AG04450 (cell line): ENCODE measurements at regions of chr13 and their contacts with region 1.

Region 1: DNA sequence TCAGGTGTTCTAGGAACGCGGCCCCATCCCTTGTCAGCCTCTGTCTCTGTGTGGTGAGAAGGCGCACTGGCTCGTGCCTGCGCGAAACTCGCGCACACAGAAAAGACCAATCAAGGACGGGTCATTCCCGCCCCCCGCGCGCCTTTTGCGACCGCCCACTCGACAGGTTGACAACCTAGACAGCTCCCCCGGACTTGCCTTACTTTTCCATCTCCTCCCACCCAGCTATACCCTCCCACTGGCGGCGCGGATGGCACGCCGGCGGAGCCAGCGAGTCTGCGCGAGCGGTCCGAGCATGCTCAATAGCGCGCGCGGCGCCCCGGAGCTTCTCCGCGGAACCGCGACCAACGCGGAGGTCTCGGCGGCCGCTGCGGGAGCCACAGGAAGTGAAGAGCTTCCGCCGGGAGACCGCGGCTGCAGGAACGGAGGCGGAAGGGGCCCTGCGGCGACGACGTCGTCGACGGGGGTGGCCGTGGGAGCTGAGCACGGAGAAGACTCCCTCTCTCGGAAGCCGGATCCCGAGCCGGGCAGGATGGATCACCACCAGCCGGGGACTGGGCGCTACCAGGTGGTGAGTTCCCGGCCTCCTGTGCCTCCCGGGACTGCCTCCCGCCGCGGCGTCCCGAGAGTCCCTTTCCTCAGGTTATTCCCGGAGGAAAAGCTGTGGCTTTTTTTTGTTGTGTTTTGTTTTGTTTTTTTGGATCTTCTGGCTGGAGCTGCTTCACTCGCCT is at the start of gene NDFIP2:
- DNase-seq: peak; percentile 58
- H3K4me3 ChIP-seq: peak within 1 kb of the TSS; percentile 85
- H3K27ac ChIP-seq: peak within 1 kb of the TSS; percentile 31
- H3K27me3 ChIP-seq: no peaks in the 10 kb centered on the region
- CTCF ChIP-seq: no peak
- polyA plus RNA-seq, gene NDFIP2: 32.5 and 33.0 TPM in 2 replicates

Region 2: DNA sequence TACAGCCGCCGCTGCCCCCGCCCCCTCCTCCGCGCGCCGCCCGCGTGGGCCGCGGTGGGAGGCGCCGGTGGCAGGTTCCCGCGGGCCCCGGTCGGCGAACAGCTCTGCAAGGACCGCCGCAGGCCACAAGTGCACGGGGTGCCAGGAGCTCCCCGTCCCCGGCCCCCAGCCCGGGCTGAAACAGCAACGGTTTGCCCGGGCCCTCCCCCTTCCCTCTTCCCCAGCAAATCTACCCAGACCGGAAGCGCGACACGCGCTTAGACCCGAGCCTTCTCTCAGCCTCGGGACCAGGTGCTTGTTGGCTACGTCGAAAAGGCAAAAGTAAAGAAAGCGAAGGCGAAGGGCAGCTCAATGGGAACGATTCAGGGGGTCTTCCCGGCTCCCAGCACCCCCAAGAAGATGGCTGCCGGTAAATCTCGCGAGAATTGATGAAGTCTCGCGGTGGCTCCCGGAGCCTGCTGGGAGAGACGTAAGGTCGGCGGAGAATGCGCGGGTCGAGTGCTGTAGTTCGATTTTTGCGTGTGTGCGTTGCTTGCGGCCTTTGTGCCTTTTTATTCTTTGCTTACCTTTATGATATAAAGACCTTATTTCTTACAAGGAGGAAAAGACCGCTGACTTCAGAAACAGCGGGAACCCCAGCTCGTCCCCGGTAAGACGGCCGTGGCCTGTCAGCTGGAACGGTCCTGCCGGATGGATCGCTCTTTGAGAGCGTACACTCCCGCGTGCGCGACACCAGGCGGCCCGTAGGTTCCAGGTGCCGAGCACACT is 75.1 kb before region 1 on chr13 and contains the start of gene RBM26:
- CTCF ChIA-PET with region 1: no interaction called
- POLR2A ChIA-PET with region 1: interaction called, 10 read pairs
- DNase-seq: peak; percentile 89
- H3K4me3 ChIP-seq: peak within 1 kb of the TSS; percentile 92
- H3K27ac ChIP-seq: peak within 1 kb of the TSS; percentile 82
- H3K27me3 ChIP-seq: no peaks in the 10 kb centered on the region
- CTCF ChIP-seq: no peak; the same call in 1 of the 2 replicates
- polyA plus RNA-seq, gene RBM26: 20.8 and 29.1 TPM in 2 replicates